Right ventricle myocardium inferior (tissue), 1 donor: ENCODE measurements at regions of chr15 and their contacts with region 1.

Region 1: DNA sequence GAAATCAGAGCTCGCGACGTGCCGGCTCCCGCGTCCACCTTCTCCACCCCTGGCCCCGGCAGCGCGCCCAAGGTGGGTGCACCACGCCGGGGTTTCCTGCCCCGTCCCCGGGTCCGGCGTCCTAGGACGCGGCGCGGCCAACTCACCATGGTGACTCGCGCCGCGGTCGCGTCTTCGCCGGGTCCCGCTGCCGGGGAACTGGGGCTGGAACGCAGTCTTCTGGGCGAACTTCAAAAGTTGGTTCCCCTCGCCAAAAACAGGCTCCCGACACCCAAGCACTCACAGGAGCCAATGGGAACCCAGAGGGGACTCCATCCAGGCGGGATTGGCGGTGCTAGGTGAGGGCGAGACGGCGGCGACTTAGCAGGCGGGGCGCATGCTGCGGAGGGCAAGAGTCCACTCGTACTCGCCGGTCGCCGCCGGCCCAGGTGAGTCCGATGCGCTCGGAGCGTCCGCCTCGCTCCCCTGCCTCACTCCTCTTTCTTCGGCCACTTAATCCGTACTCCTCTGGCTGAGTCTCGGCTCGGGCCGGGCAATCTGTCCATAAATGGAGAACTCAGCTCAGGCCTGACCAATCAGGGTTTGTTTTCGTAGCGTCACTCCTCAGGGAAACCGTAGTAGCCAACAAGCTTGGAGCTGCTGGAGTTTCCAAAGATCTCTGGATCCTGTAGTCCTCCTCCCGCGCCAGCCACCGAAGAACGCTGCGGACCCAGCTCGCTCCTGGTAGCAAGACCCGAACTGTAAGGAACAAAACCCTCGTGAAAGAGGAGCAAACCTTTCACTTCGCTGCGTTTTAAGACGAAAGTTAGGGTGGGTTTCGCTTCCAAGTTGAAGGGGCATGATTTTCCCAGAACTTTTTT is at the start of gene MYO1E:
- DNase-seq: peak; percentile 91
- ATAC-seq: peak; percentile 99
- total RNA-seq, gene MYO1E: 37.6 TPM

Region 2: GRCh38 chr15:59247364-59247763 is 125.2 kb before region 1 on chr15:
- intact Hi-C with region 1: loop called (anchors 5 kb)
- DNase-seq: no peak
- ATAC-seq: peak; percentile 71

Region 3: DNA sequence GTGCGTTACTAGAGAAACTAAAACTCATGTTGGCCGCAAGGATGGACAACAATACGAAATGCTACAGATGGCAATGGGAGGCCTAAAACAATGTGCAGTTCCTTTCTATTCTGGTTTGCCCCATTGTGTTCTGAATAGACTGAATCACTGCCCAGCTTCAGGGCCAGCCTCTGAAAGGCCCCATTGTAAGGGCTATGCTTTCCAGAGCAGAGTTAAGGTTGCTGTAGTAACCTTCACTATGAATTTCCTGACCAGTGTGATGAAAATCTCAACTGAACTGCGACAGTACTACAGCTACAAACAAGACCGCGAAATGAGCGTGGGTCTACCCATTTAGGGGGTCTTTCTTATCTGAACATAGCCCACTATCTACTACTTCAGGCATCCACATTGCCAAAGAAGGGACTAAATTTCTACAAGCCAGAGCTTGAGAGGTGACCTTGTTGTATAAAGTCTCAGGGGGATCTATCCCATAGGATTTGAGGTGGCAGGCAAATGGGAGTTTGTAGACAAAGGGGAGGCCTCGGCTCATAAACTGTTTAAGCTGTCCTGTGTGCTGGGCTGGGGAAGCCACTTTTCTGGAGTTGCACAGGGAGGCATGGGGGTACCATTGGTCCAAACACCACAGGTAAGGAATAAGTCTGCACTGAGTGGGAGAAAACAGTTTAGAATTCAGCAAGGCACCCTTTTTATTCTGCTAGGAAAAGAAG is 80.0 kb before region 1 on chr15:
- intact Hi-C with region 1: loop called (anchors 1 kb)
- DNase-seq: no peak
- ATAC-seq: no peak

Region 4: DNA sequence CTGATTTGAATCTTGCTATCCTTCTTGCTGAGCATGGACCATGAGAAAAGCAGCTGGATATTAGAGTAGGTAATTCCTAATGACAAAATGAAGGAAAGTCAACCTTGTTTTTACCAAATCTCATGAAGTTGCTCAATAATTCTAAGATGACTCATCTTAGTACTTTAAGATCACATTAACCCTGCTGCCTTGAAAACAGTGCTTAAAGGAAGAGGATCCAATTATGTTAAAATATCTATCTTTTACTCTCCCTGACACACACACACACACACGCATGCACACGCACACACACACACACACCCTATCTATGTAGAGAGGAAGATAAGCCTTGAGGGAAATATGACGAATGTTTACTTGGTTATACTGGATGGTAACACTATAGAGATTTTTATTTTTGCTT is 16.1 kb after region 1 on chr15:
- intact Hi-C with region 1: no loop called
- DNase-seq: no peak
- ATAC-seq: peak; percentile 31

Region 5: GRCh38 chr15:59437817-59438562 is 65.4 kb after region 1 on chr15 and contains the start of gene FAM81A:
- intact Hi-C with region 1: loop called (anchors 2 kb)
- DNase-seq: peak; percentile 92
- ATAC-seq: peak; percentile 94
- total RNA-seq, gene FAM81A: 11.0 TPM

Region 6: GRCh38 chr15:59448871-59449270 is 76.3 kb after region 1 on chr15:
- intact Hi-C with region 1: no loop called
- DNase-seq: no peak
- ATAC-seq: no peak